Endothelial cell of umbilical vein (primary cell): ENCODE measurements at regions of chr7 and their contacts with region 1.

Region 1: GRCh38 chr7:88219781-88220747 is at the start of gene SRI:
- DNase-seq: peak; percentile 88
- H3K4me3 ChIP-seq: peak within 1 kb of the TSS; percentile 81 to 94 (median 93)
- H3K27ac ChIP-seq: peak within 1 kb of the TSS; percentile 94
- H3K4me1 ChIP-seq: peaks cover 13% of the 10 kb centered on the region
- H3K27me3 ChIP-seq: no peaks in the 10 kb centered on the region
- CTCF ChIP-seq: peak; percentile 57 to 62
- POLR2A ChIP-seq: peak; percentile 82
- total RNA-seq, gene SRI: 191 and 204 TPM in 2 replicates

Region 2: GRCh38 chr7:87628780-87629569 is 591.1 kb before region 1 on chr7:
- CTCF ChIA-PET with region 1: no interaction called
- POLR2A ChIA-PET with region 1: no interaction called
- dilution Hi-C with region 1: no loop called
- intact Hi-C with region 1: loop called (anchors 5 kb)
- DNase-seq: peak; percentile 13
- H3K4me3 ChIP-seq: peak overlapping the region; percentile 44 to 53 (median 49)
- H3K27ac ChIP-seq: no peak overlapping the region
- H3K4me1 ChIP-seq: peaks cover 4% of the 10 kb centered on the region
- H3K27me3 ChIP-seq: peaks cover 0 to 2% of the 10 kb centered on the region in 2 experiments
- CTCF ChIP-seq: no peak
- POLR2A ChIP-seq: no peak

Region 3: GRCh38 chr7:87866089-87866488 is 354.0 kb before region 1 on chr7:
- CTCF ChIA-PET with region 1: no interaction called
- POLR2A ChIA-PET with region 1: no interaction called
- dilution Hi-C with region 1: no loop called
- intact Hi-C with region 1: no loop called
- DNase-seq: no peak
- H3K4me3 ChIP-seq: no peak overlapping the region
- H3K27ac ChIP-seq: no peak overlapping the region
- H3K4me1 ChIP-seq: no peaks in the 10 kb centered on the region
- H3K27me3 ChIP-seq: no peaks in the 10 kb centered on the region
- CTCF ChIP-seq: no peak
- POLR2A ChIP-seq: no peak

Region 4: GRCh38 chr7:87933945-87934698 is 285.9 kb before region 1 on chr7 and contains the start of gene ADAM22:
- CTCF ChIA-PET with region 1: no interaction called
- POLR2A ChIA-PET with region 1: interaction called, 3 read pairs
- dilution Hi-C with region 1: no loop called
- intact Hi-C with region 1: loop called (anchors 10 kb)
- DNase-seq: peak; percentile 89
- H3K4me3 ChIP-seq: peak within 1 kb of the TSS; percentile 7 to 66 (median 55)
- H3K27ac ChIP-seq: no peak within 1 kb of the TSS
- H3K4me1 ChIP-seq: peaks cover 11% of the 10 kb centered on the region
- H3K27me3 ChIP-seq: peaks cover 5 to 18% of the 10 kb centered on the region in 2 experiments
- CTCF ChIP-seq: no peak
- POLR2A ChIP-seq: no peak
- total RNA-seq, gene ADAM22: 0.53 and 1.4 TPM in 2 replicates

Region 5: GRCh38 chr7:88233828-88234227 is 13.8 kb after region 1 on chr7:
- CTCF ChIA-PET with region 1: no interaction called
- POLR2A ChIA-PET with region 1: no interaction called
- dilution Hi-C with region 1: no loop called
- intact Hi-C with region 1: no loop called
- DNase-seq: no peak
- H3K4me3 ChIP-seq: no peak overlapping the region
- H3K27ac ChIP-seq: no peak overlapping the region
- H3K4me1 ChIP-seq: no peaks in the 10 kb centered on the region
- H3K27me3 ChIP-seq: no peaks in the 10 kb centered on the region
- CTCF ChIP-seq: no peak
- POLR2A ChIP-seq: no peak

Region 6: DNA sequence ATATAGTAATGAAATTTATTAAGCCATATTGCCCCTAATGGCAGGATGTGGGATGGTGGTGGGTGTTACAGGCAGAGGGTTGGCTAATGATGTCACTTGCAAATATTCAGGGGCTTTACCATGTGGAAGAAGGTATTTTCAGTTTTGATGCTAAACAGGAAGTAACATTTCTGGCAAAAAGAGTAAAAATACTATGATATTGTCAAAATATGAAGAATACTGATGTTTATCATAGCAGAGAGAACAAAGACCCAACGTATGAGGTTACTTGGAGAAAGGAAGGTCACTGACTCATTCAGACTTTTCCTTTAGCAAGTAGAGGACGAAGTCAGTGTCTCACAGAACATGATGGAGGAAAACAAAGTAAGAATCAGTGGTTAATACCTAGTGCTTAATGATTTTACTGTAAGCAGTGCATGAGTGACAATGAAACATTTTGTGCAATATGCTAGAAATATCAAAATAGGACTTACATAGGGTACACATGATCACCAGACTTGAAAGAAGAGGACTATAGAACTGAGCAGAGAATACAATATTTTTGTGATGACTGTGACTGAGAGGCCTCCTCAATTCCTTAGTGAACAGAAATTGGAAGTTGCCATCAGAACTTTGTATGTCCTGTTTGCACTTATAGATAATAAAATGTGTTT is 176.4 kb after region 1 on chr7:
- CTCF ChIA-PET with region 1: interaction called, 4 read pairs
- POLR2A ChIA-PET with region 1: no interaction called
- dilution Hi-C with region 1: no loop called
- intact Hi-C with region 1: loop called (anchors 5 kb)
- DNase-seq: peak; percentile 79
- H3K4me3 ChIP-seq: peak overlapping the region in 1 of 3 experiments; percentile 2
- H3K27ac ChIP-seq: peak overlapping the region; percentile 68
- H3K4me1 ChIP-seq: peaks cover 21% of the 10 kb centered on the region
- H3K27me3 ChIP-seq: no peaks in the 10 kb centered on the region
- CTCF ChIP-seq: no peak
- POLR2A ChIP-seq: no peak